ENCODE measurements at regions of chr20 and their contacts with region 1.

Region 1: GRCh38 chr20:653110-653589 is at the start of gene SRXN1:
- DNase-seq: peak; percentile 97
- ATAC-seq: peak; percentile 95
- total RNA-seq, gene SRXN1: 40.4 TPM

Region 2: GRCh38 chr20:347640-348484 is 305.3 kb before region 1 on chr20:
- intact Hi-C with region 1: loop called (anchors 5 kb)
- DNase-seq: peak; percentile 93
- ATAC-seq: peak; percentile 92

Region 3: GRCh38 chr20:496126-496696 is 156.9 kb before region 1 on chr20:
- intact Hi-C with region 1: no loop called
- DNase-seq: no peak
- ATAC-seq: peak; percentile 54

Region 4: GRCh38 chr20:543369-544152 is 109.6 kb before region 1 on chr20 and contains the start of gene CSNK2A1:
- intact Hi-C with region 1: loop called (anchors 5 kb)
- DNase-seq: peak; percentile 97
- ATAC-seq: peak; percentile 99
- total RNA-seq, gene CSNK2A1: 111 TPM

Region 5: GRCh38 chr20:667391-667964 is 14.3 kb after region 1 on chr20:
- intact Hi-C with region 1: loop called (anchors 1 kb)
- DNase-seq: peak; percentile 82
- ATAC-seq: no peak

Region 6: GRCh38 chr20:728248-728944 is 75.2 kb after region 1 on chr20:
- intact Hi-C with region 1: loop called (anchors 2 kb)
- DNase-seq: no peak
- ATAC-seq: peak; percentile 84